RWPE1 (cell line): ENCODE measurements at regions of chr2 and their contacts with region 1.

Region 1: DNA sequence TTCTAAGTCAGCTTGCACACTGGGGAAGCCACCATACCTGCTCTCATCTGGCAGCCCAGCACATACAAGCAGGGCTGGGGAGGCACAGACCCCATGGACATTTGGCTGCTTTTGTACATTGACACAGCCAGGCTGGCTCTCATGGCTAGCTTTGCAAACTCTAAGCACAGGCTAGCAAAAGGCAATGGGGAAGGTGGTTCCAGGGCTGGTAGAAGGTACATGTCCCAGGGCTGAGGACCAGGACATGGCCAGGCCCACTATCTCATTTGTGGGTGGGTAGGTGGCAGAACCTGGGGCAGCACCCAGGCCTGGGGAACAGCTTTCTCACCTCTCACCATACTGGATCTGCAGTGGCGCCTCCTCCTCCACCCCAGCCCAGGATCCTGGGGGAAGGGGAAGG is 90.9 kb downstream of the HS1BP3 start:
- DNase-seq: no peak
- H3K27ac ChIP-seq: no peak overlapping the region
- CTCF ChIP-seq: no peak

Region 2: GRCh38 chr2:20509766-20510495 is 50.1 kb before region 1 on chr2:
- CTCF ChIA-PET with region 1: no interaction called
- POLR2A ChIA-PET with region 1: interaction called, 21 read pairs
- DNase-seq: peak; percentile 87
- H3K27ac ChIP-seq: peak overlapping the region; percentile 92
- CTCF ChIP-seq: no peak